GM10248 (cell line): ENCODE measurements at regions of chr2 and their contacts with region 1.

Region 1: DNA sequence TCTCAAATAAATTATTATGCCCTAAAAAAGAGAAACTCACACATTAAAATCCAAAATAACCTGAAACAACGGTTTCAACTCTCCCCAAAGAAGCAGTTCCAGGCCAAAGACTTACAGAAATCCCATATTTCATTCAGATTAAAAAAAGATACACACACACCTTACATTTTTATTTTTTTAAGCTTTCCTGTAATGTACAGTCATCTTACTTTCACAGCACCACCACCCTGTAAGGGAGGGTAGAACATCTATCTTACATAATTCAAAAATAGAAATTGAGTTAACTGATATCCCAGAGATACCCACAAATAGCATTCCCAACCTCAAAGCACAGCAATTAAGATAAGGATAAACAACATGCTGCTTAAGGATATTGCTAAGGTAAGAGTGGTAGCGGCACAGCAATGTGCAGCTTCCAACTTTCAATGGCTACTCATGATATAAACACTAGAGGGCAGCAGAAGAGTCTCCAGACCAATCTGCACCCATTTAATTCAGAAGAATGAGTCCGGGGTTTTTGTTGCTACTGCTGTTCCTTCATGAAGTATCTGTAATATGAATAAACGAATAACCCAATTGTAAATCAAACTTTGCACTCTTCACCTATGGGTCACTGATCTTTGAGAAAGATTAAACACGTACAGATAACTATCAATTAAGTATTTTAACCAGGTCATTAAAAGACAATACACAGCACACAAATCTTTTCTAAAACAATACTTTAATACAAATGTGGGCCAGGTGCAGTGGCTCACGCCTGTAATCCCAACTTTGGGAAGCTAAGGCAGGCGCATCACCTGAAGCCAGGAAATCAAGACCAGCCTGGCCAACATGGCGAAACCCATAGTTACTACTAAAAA is 11.3 kb downstream of the GFPT1 start:
- DNase-seq: peak; percentile 33
- CTCF ChIP-seq: peak; percentile 38

Region 2: GRCh38 chr2:69386789-69387734 is 11.3 kb after region 1 on chr2 and contains the start of gene GFPT1:
- CTCF ChIA-PET with region 1: interaction called, 13 read pairs
- POLR2A ChIA-PET with region 1: interaction called, 9 read pairs
- DNase-seq: peak; percentile 96
- CTCF ChIP-seq: no peak

Region 3: DNA sequence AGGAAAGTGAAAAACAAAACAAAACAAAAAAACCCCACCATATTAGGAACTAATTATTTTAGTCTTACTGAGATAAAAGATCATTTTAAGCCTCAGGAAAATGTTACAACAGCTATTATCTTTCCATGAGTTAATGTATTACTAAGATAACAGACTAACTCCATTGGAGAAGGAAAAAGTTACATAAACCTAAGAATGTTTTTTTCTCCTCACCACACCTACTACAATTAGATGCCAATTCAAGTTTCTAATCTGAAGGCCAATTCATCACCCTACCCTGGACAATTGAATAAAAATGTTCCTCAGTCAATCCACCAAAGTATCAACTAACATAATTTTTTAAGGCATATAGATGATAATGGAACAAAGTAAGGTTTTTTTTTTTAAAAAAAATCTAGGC is 21.5 kb after region 1 on chr2:
- CTCF ChIA-PET with region 1: no interaction called
- POLR2A ChIA-PET with region 1: no interaction called
- DNase-seq: no peak
- CTCF ChIP-seq: no peak